Calu3 (cell line): ENCODE measurements at regions of chr12 and their contacts with region 1.

Region 1: GRCh38 chr12:76020731-76021672 is 10.6 kb downstream of the PHLDA1 start:
- DNase-seq: peak; percentile 70
- H3K4me3 Mint-ChIP-seq: peak overlapping the region; percentile 25
- H3K27ac Mint-ChIP-seq: peak overlapping the region; percentile 97
- H3K4me1 Mint-ChIP-seq: peaks cover 56% of the 10 kb centered on the region
- H3K27me3 Mint-ChIP-seq: no peaks in the 10 kb centered on the region
- CTCF ChIP-seq: no peak

Region 2: DNA sequence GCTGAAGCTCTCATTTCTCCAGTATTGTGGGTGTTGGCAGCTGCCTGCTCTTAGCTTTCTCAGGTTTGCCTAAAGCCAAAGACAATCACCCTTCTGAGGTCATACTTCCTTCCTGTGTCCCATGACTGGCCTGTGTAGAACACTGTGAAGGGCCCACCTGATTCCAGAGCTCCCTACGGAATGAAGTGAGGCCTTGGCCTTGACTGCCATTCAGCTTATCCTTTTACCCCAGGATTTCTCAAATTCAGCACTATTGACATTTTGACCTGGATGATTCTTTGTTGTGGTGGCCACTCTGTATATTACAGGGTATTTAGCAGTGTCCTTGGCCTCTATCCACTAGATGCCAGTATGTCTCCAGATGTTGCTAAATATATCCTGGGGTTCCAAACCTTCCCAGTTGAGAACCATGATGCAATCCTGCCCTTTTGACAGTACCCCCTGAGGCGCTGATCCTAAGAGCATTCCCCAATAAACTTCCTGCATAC is 397.3 kb before region 1 on chr12:
- CTCF ChIA-PET with region 1: no interaction called
- intact Hi-C with region 1: no loop called
- DNase-seq: peak; percentile 40
- H3K4me3 Mint-ChIP-seq: no peak overlapping the region
- H3K27ac Mint-ChIP-seq: peak overlapping the region; percentile 89
- H3K4me1 Mint-ChIP-seq: peaks cover 35% of the 10 kb centered on the region
- H3K27me3 Mint-ChIP-seq: no peaks in the 10 kb centered on the region
- CTCF ChIP-seq: peak; percentile 27

Region 3: DNA sequence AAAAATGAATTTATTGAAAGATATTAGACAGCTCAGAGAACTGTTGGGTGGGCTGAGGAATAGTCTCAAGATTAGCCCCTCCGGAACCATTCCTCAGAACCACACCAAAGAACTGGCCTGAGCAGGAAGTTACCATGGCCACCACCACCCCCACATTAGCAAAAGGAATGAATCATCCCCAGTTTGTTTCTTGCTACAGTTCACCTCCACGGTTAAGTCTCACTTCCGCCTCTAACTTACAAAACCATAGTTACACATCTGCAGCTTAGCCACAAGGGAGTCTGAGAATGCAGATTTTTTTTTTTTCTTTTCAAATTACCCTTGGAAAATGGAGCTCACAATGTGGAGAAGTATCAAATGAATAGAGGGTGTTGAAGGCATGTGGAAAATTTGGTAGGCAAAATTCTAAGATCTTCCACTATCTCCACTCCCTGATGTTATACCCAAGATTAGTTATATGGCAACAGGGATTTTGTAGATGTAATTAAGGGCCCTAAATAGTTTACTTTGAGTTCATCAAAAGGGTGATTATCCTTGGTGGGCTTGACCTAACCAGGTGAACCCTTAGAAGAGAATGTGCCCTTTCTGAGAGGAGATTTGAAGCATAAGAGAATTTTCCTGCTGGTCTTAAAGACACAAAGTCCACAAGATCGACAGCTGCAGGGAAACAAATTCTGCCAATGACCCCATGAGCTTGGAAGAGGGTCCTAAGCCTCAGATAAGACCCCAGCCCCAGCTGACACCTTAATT is 379.8 kb before region 1 on chr12:
- CTCF ChIA-PET with region 1: no interaction called
- intact Hi-C with region 1: loop called (anchors 2 kb)
- DNase-seq: peak; percentile 83
- H3K4me3 Mint-ChIP-seq: peak overlapping the region; percentile 46
- H3K27ac Mint-ChIP-seq: peak overlapping the region; percentile 99
- H3K4me1 Mint-ChIP-seq: peaks cover 72% of the 10 kb centered on the region
- H3K27me3 Mint-ChIP-seq: no peaks in the 10 kb centered on the region
- CTCF ChIP-seq: no peak

Region 4: DNA sequence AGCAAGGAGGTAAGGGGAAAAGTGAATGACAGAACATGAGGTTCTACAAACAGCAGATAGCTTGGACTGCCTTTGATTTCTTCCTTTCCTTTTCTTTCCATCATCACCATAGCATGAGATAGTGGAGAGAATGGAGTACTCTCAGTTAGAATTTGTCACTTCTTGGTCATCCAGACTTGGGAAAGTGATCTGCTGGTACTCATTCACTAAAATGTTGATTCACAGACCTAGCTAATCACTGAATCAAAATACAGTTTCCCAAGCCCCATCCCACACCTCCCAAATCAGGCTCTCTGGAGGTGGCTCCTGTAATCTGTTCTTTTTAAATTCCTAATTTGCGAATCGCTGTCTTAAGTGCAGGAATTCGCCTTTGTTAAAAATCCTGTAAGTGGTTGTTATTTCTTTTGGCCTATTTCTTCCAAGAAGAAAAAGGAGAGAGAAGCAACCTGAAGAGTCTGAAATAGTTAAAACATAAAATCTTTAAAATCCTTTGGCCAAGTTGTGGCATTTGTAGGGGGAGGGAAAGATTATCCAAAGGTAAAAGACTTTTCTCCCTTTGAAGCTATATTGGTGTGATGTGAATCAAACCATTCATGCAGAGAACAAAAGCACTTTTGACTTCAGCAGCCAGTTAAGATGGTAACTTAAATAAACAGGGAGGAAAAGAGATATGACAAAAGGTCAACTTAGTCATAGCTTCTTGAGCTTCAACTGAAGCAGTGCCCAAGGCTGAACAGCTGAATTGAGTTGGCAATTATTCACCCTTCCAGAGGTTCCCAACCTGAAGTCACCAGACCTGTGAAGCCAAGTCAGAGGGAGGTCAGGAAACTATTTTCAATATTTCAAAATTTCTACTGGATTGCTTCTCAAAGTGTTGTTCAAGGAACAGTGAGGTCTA is 254.5 kb before region 1 on chr12:
- CTCF ChIA-PET with region 1: no interaction called
- intact Hi-C with region 1: loop called (anchors 2 kb)
- DNase-seq: peak; percentile 63
- H3K4me3 Mint-ChIP-seq: no peak overlapping the region
- H3K27ac Mint-ChIP-seq: peak overlapping the region; percentile 73
- H3K4me1 Mint-ChIP-seq: peaks cover 60% of the 10 kb centered on the region
- H3K27me3 Mint-ChIP-seq: no peaks in the 10 kb centered on the region
- CTCF ChIP-seq: no peak

Region 5: DNA sequence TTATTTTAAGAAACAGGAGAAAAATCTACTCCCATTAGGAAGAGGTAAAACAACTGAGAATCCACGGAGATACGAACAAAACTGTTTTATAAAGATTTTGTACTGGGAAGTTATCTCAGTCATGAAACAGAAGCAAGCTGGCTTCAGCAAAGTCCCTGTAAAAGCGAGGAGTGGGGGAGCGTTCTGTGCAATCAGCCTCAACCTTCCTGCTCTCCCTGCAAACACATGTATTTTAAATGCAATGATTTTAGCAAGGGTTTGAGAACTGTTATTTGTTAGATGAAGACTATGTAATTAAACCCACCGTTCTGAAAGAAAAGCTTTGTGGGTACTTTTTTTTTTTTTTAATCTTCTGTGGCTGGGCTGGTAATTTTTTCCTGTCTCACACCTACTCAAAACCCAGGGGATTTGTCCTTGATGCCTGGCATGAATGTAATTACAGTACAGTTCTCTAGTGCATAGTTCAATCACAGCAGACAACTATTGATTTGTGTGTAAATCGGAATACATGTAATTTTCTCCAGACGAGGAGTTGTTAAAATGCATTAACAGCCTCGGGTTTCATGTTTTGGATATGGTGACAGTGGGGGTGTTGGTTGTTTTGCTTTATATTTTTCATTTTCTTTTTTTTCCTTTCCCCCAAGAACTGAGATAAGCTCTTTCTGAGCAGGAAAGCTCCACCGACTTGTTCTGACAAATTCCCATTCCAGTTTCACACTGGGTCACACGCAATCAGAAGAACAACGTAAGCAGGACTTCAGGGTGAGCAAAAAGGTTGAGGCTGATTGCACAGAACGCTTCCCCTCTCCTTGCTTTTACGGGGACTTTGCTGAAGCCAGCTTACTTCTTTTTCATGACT is 143.0 kb before region 1 on chr12:
- CTCF ChIA-PET with region 1: no interaction called
- intact Hi-C with region 1: loop called (anchors 5 kb)
- DNase-seq: no peak
- H3K4me3 Mint-ChIP-seq: peak overlapping the region; percentile 52
- H3K27ac Mint-ChIP-seq: peak overlapping the region; percentile 83
- H3K4me1 Mint-ChIP-seq: peaks cover 50% of the 10 kb centered on the region
- H3K27me3 Mint-ChIP-seq: no peaks in the 10 kb centered on the region
- CTCF ChIP-seq: no peak

Region 6: DNA sequence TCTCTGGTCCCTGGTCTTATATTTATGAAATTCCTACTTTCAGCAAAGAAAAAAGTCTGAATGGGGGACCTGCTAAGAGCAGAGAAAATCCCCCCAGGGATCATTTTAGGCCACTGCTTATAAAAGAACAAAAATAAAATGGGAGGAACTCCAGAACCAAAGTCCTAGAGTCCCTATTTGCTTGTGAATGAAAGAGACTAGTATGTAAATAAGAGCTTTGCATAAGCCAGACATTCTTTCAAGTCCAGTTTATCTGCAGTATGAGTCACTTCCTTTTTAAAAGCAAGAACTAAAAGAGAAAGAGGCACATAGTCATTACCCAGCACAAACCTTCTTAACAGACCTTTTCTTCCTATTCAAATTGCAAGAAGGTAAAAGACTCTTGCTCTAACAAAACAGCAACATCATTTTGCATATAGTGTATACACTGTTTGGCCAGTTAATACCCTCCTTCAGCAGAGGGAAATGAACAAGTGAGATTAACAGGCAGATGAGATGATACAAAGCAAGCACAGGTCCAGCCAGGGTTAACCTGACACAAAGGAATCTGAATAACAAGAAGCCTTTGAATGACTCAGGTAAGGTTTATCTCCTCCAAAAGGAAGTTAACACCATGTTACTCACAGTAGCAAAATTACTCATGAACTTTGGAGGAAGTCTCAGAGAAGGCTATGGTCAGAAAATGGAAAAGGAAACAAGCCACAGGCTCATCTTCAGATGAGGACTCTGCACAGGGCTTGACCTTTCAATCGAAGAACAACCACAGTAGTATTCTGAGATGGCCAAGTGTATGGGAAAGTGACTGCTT is 76.7 kb before region 1 on chr12:
- CTCF ChIA-PET with region 1: interaction called, 6 read pairs
- intact Hi-C with region 1: loop called (anchors 2 kb)
- DNase-seq: peak; percentile 44
- H3K4me3 Mint-ChIP-seq: peak overlapping the region; percentile 57
- H3K27ac Mint-ChIP-seq: peak overlapping the region; percentile 87
- H3K4me1 Mint-ChIP-seq: peaks cover 34% of the 10 kb centered on the region
- H3K27me3 Mint-ChIP-seq: no peaks in the 10 kb centered on the region
- CTCF ChIP-seq: no peak

Region 7: GRCh38 chr12:76031537-76032073 is 10.6 kb after region 1 on chr12 and contains the start of gene PHLDA1:
- CTCF ChIA-PET with region 1: interaction called, 17 read pairs
- intact Hi-C with region 1: no loop called
- DNase-seq: peak; percentile 99
- H3K4me3 Mint-ChIP-seq: peak within 1 kb of the TSS; percentile 86
- H3K27ac Mint-ChIP-seq: peak within 1 kb of the TSS; percentile 98
- H3K4me1 Mint-ChIP-seq: peaks cover 38% of the 10 kb centered on the region
- H3K27me3 Mint-ChIP-seq: no peaks in the 10 kb centered on the region
- CTCF ChIP-seq: peak; percentile 43
- total RNA-seq, gene PHLDA1: 143 and 151 TPM in 2 replicates